CD8-positive, alpha-beta T cell (primary cell): ENCODE measurements at regions of chr6 and their contacts with region 1.

Region 1: GRCh38 chr6:143060354-143060805 is 309 bp upstream of the AIG1 start:
- DNase-seq: peak; percentile 49 to 89 (median 75)
- ATAC-seq: peak; percentile 66
- H3K4me3 ChIP-seq: peak overlapping the region; percentile 90 to 92
- H3K4me3 Mint-ChIP-seq: peak overlapping the region; percentile 92
- H3K27ac ChIP-seq: peak overlapping the region; percentile 67 to 81
- H3K27ac Mint-ChIP-seq: peak overlapping the region; percentile 93
- H3K4me1 ChIP-seq: peaks cover 17% of the 10 kb centered on the region
- H3K4me1 Mint-ChIP-seq: peaks cover 21% of the 10 kb centered on the region
- H3K27me3 ChIP-seq: no peaks in the 10 kb centered on the region
- H3K27me3 Mint-ChIP-seq: no peaks in the 10 kb centered on the region
- CTCF ChIP-seq: no peak

Region 2: DNA sequence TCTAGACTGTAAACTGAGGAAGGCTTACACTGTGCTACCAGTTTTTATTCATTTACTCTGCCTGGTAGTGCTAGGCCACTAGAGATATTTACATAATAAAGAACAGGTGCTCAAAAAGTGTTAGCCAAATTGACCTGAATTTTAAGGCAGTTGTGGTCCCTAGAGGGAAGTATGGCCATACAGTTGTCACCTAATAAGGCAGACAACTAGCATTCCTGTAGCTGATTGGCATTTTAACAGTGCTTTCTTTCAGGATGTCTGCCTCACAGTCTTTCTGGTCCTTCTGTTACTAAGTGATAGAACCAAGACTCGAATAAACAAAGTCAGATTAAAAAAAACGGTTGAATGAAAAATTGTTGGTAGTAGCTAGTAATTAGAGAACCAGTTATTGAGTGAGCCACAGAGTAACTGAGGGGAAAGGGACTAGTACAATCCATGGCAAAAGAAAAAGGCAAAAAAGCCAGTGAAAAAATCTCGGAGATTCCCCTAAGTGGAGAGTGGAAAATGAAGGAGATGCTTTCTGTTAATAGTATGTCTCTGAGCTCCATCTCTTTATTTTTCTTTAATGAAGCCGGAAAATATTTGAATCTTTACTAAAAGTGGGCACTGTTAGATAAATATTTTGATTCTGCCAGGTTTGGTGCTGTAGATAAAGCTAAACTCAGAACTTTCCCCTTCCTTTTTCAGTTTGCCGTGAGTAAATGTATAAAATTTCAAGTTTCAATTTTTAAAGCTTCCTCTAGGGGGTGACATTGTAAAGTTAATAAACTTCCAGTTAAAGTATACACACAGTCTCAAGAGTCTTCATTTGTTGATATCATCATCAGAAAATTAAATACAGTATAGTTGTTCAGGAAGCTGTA is 904.3 kb before region 1 on chr6:
- CTCF ChIA-PET with region 1: no interaction called
- POLR2A ChIA-PET with region 1: no interaction called
- intact Hi-C with region 1: loop called in 1 of 2 experiments (anchors 10 kb)
- DNase-seq: peak in 2 of 9 experiments; percentile 19 to 44
- ATAC-seq: peak; percentile 76
- H3K4me3 ChIP-seq: no peak overlapping the region
- H3K4me3 Mint-ChIP-seq: no peak overlapping the region
- H3K27ac ChIP-seq: no peak overlapping the region
- H3K27ac Mint-ChIP-seq: peak overlapping the region; percentile 39
- H3K4me1 ChIP-seq: peaks cover 8% of the 10 kb centered on the region
- H3K4me1 Mint-ChIP-seq: peaks cover 69% of the 10 kb centered on the region
- H3K27me3 ChIP-seq: no peaks in the 10 kb centered on the region
- H3K27me3 Mint-ChIP-seq: no peaks in the 10 kb centered on the region
- CTCF ChIP-seq: peak; percentile 83

Region 3: DNA sequence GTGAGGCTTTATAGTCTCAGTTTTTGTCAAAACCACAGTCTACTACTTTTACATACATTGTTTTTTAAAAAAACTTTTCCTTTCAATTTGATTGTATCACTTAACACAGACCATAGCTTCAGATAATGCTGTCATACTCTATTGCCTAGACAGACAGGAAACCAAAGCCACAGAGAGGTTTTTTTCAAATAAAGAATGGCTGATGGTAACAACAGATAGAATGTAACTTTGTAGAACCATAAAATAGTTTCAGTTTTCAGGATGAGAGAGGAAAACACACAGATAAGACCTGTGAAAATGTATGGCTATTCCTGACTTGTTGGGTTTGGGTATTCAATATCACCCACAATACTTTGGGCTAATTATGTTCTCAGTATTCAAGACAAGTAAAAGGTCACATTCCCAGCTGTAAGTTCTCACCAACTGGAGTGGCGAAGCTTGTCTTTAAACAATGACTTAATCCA is 664.6 kb before region 1 on chr6:
- CTCF ChIA-PET with region 1: no interaction called
- POLR2A ChIA-PET with region 1: no interaction called
- intact Hi-C with region 1: loop called in 1 of 2 experiments (anchors 10 kb)
- DNase-seq: peak in 2 of 9 experiments; percentile 68 to 82
- ATAC-seq: peak; percentile 87
- H3K4me3 ChIP-seq: no peak overlapping the region
- H3K4me3 Mint-ChIP-seq: peak overlapping the region; percentile 54
- H3K27ac ChIP-seq: peak overlapping the region; percentile 13 to 42
- H3K27ac Mint-ChIP-seq: peak overlapping the region; percentile 85
- H3K4me1 ChIP-seq: peaks cover 38% of the 10 kb centered on the region
- H3K4me1 Mint-ChIP-seq: peaks cover 50% of the 10 kb centered on the region
- H3K27me3 ChIP-seq: no peaks in the 10 kb centered on the region
- H3K27me3 Mint-ChIP-seq: no peaks in the 10 kb centered on the region
- CTCF ChIP-seq: no peak

Region 4: GRCh38 chr6:143015300-143015706 is 45.1 kb before region 1 on chr6:
- CTCF ChIA-PET with region 1: no interaction called
- POLR2A ChIA-PET with region 1: no interaction called
- intact Hi-C with region 1: no loop called
- DNase-seq: peak in 2 of 9 experiments; percentile 16 to 35
- ATAC-seq: no peak
- H3K4me3 ChIP-seq: no peak overlapping the region
- H3K4me3 Mint-ChIP-seq: no peak overlapping the region
- H3K27ac ChIP-seq: no peak overlapping the region
- H3K27ac Mint-ChIP-seq: no peak overlapping the region
- H3K4me1 ChIP-seq: no peaks in the 10 kb centered on the region
- H3K4me1 Mint-ChIP-seq: no peaks in the 10 kb centered on the region
- H3K27me3 ChIP-seq: no peaks in the 10 kb centered on the region
- H3K27me3 Mint-ChIP-seq: peaks cover 3% of the 10 kb centered on the region
- CTCF ChIP-seq: no peak

Region 5: DNA sequence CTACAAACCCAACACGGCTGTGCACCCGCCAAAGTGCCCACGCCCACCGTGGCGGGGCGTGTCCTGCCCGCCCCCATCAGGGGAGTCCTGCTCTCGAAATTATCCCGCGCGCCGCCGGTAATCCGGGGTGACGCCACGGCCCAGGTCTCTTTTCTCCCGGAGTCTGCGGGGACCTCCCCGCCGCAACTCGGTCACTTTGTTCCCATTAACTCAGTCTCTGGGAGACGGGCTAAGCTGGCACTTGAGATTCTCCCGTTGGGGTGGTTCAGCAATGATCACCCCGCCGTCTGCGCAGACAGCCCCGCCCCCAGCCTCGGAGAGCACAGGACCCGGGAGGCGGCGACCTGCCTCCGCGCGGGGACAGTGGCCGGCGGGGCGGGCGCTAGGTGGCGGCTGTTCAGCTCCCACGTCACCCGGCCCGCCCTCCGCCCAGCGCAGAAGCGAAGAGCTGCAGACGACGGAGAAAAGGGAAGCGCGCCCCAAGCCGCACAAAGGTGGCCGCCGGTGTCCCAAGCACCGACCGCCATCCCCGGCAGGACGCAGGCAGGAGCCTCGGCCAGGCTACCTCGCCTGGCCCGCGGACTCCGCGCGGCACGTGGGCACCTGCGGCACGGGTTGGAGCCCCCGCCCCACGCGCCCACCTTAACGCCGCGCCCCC is 1003.5 kb after region 1 on chr6:
- CTCF ChIA-PET with region 1: no interaction called
- POLR2A ChIA-PET with region 1: no interaction called
- intact Hi-C with region 1: loop called in 1 of 2 experiments (anchors 10 kb)
- DNase-seq: peak; percentile 85 to 96 (median 91)
- ATAC-seq: peak; percentile 90
- H3K4me3 ChIP-seq: peak overlapping the region; percentile 93 to 97
- H3K4me3 Mint-ChIP-seq: peak overlapping the region; percentile 91
- H3K27ac ChIP-seq: peak overlapping the region; percentile 86 to 88
- H3K27ac Mint-ChIP-seq: peak overlapping the region; percentile 95
- H3K4me1 ChIP-seq: peaks cover 16% of the 10 kb centered on the region
- H3K4me1 Mint-ChIP-seq: peaks cover 30% of the 10 kb centered on the region
- H3K27me3 ChIP-seq: no peaks in the 10 kb centered on the region
- H3K27me3 Mint-ChIP-seq: no peaks in the 10 kb centered on the region
- CTCF ChIP-seq: no peak